SK-MEL-5 (cell line): ENCODE measurements at regions of chr21 and their contacts with region 1.

Region 1: DNA sequence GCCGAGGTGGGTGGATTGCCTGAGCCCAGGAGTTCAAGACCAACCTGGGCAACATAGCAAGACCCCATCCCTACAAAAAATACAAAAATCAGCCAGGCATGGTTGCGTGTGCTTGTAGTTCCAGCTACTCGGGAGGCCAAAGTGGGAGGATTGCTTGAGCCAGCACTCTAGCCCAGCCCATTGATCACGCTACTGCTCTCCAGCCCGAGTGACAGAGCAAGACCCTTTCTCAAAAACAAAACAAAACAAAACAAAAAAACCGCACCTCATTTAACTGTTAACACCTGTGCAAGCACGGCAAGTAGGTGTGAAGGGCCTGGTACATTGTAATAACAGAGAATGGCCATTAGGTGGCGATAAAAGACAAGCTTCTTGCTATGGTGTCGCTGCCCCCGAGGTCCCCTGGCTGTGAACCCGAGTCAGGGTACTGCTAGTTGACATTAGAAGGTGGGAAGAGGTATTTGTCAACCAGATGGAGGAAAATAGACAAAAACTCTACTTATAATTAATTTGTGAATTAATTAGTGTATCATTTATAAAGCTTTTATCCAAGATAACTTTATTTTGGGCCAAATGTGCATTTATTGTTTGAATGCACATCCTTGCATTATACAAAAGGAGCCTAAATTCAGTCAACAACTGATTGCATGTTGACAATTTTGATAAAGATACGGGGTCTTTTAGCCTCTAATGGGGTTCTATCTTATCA is 66.5 kb downstream of the SH3BGR start:
- DNase-seq: peak; percentile 66

Region 2: GRCh38 chr21:39353295-39353694 is 165.0 kb before region 1 on chr21:
- in situ Hi-C with region 1: no loop called
- DNase-seq: no peak

Region 3: GRCh38 chr21:39430457-39430856 is 87.8 kb before region 1 on chr21:
- in situ Hi-C with region 1: no loop called
- DNase-seq: no peak

Region 4: DNA sequence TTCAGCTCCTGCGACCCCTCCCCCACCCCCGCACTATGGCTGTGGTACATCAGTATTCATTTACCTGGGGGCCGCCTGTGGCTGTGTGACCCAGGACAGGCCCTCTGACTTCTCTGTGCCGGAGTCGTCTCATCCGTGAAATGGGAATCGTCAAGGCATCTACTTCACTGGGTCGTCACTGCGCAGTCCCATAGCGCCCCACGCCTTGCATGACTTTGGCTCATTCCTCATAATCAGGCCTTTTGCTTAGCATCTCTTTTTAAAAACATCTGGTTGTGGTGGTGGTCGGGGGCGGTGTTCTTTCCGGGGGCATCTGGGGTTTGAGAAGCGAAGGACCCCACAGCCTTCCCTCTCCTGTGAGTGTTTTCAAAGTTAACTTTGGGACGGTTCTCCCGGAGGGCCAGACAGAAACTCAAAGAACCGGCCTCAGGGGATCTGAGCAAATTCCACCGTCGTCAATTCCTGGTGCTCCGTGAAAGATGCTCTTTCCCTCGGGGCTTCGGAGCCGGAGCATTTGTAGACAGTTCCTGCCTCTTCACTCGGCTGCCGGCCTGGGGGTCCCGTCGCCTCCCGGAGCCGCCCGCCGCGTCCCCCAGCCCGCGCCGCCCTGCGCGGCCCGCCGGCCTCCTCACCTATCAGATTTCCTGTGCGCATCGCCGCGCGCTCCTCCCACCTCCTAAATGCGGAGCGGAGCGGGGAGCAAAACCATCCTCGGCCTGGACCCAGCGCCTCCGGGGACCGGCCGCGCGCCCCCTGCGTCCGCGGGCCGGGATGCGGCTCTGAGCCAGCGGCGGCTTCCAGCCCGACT is 94.1 kb after region 1 on chr21 and contains the start of gene B3GALT5:
- in situ Hi-C with region 1: loop called (anchors 25 kb)
- DNase-seq: no peak
- total RNA-seq, gene B3GALT5: not detected in 2 replicates

Region 5: DNA sequence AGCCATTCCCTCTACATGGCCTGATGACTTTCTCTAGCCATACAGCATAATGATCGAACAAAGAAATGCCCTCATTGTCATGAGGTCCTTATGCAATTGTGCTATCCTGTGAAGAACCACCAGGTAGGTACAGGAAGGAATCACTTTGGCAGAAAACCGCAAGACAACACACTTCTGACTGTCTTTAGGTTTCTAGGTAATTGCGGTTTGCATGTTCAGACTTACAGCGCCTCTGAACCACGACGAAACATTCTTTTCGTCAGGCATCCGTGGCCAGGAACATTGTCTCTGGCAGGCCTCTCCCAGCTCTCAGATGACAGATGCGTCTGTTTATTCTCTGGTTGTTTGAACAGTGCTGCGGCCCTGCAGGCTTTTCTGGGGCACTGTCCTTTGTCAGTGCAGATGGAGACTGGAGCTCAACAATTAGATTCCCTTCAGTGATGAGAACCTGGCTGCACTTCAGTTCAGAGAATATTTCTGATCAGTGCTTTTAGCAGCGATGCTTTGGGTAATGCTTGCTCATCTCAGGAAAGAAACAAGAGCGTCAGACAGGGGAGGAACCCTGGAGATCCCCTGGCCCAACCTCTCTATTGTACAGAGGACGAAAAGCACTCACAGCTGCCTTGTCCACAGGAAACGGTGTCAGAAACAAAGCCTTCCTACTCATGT is 157.8 kb after region 1 on chr21:
- in situ Hi-C with region 1: no loop called
- DNase-seq: no peak

Region 6: DNA sequence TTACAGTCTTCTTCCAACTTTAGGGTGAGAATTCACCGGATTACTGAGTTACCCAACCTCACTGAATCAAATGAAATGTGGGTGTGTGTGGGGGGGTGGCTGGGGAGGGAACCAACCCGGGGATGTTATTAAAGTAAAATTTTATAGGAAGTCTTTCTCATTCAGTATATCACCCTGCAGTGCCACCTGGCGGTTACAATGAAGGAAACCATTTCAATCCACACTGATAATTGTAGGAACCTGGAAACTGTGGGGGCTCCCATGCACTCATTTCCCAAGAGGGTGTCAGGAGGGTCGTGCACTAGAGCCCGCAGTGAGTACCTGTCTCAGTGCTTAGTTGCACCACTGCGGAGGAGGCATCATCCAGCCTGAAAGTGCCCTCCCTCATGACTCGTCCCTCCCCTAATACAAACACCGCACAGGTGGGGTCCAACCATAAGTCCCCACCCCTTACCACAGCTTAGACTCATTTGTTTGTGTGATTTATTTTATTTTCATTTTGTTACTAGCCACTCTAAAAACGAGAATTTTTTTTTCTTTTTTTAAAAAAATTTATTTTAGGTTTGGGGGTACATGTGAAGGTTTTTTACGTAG is 197.6 kb after region 1 on chr21:
- in situ Hi-C with region 1: loop called (anchors 25 kb)
- DNase-seq: peak; percentile 53